PC-3 (cell line): ENCODE measurements at regions of chr1 and their contacts with region 1.

Region 1: GRCh38 chr1:150696590-150697524 is at the start of gene GOLPH3L:
- DNase-seq: peak; percentile 99
- ATAC-seq: peak; percentile 96
- H3K4me3 ChIP-seq: peak within 1 kb of the TSS; percentile 78
- H3K27ac ChIP-seq: 0 out of 2 replicates have a peak within 1 kb of the TSS, but pooled peaks have one; percentile 19
- H3K4me1 ChIP-seq: peaks cover 28% of the 10 kb centered on the region
- H3K27me3 ChIP-seq: no peaks in the 10 kb centered on the region
- CTCF ChIP-seq: no peak
- total RNA-seq, gene GOLPH3L: 9.6 and 15.6 TPM in 2 replicates

Region 2: GRCh38 chr1:150464422-150464826 is 232.4 kb before region 1 on chr1:
- CTCF ChIA-PET with region 1: no interaction called
- POLR2A ChIA-PET with region 1: no interaction called
- intact Hi-C with region 1: no loop called
- DNase-seq: peak; percentile 79
- ATAC-seq: peak; percentile 66
- H3K4me3 ChIP-seq: no peak overlapping the region
- H3K27ac ChIP-seq: no peak overlapping the region
- H3K4me1 ChIP-seq: no peaks in the 10 kb centered on the region
- H3K27me3 ChIP-seq: no peaks in the 10 kb centered on the region
- CTCF ChIP-seq: peak; percentile 83

Region 3: GRCh38 chr1:150561974-150562445 is 134.8 kb before region 1 on chr1:
- CTCF ChIA-PET with region 1: no interaction called
- POLR2A ChIA-PET with region 1: no interaction called
- intact Hi-C with region 1: loop called (anchors 5 kb)
- DNase-seq: peak; percentile 91
- ATAC-seq: peak; percentile 68
- H3K4me3 ChIP-seq: peak overlapping the region; percentile 69
- H3K27ac ChIP-seq: peak overlapping the region; percentile 96
- H3K4me1 ChIP-seq: peaks cover 37% of the 10 kb centered on the region
- H3K27me3 ChIP-seq: no peaks in the 10 kb centered on the region
- CTCF ChIP-seq: no peak

Region 4: DNA sequence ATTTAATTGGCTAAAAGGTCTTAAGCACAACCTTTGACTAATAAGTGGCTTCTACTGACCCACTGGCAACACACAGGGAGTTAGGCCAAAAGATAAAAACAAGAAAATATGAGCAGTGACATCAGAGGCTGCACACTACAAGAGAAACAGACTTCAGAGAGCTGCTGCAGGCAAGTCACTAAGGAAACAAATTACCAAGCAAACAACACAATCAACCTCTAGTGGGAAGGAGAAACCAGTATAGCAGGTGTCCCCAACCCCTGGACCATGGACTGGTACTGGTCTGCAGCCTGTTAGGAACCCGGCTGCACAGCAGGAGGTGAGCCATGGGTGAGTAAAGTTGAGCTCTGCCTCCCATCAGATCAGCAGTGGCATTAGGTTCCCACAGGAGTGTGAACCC is 46.7 kb before region 1 on chr1:
- CTCF ChIA-PET with region 1: no interaction called
- POLR2A ChIA-PET with region 1: no interaction called
- intact Hi-C with region 1: loop called (anchors 5 kb)
- DNase-seq: peak; percentile 66
- ATAC-seq: peak; percentile 71
- H3K4me3 ChIP-seq: no peak overlapping the region
- H3K27ac ChIP-seq: peak overlapping the region; percentile 68
- H3K4me1 ChIP-seq: peaks cover 7% of the 10 kb centered on the region; the same call in 1 of the 2 replicates
- H3K27me3 ChIP-seq: no peaks in the 10 kb centered on the region
- CTCF ChIP-seq: no peak

Region 5: DNA sequence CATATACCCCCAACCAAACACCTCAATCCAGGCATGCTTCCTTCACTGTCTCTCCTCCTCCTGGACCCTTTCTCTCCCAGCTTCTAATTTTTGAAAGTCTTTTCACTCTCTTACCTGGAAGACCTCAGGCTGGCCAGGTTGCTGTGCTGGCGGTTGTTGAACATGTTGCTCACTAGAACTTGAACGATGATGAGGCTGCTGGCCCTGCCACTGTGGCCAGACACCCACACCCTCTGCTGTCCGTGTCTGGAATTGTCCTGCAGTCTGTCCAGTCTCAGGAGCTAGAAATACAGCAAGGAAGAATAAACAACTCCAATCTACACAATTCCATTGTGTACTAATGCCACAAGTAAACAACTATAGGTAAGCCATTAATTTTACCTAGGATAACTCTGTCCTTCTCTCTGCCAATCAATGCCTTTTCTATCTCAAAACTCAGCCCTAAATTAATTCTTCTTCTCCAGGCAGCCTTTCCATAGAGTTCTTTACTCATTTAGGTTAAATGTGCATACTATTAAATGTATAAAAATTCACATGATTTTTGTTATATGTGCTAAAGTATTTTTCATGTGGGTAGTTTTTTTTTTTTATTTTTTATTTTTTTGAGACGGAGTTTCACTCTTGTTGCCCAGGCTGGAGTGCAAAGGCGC is 116.3 kb after region 1 on chr1:
- CTCF ChIA-PET with region 1: interaction called, 9 read pairs
- POLR2A ChIA-PET with region 1: interaction called, 4 read pairs
- intact Hi-C with region 1: loop called (anchors 1 kb)
- DNase-seq: peak; percentile 79
- ATAC-seq: peak; percentile 98
- H3K4me3 ChIP-seq: no peak overlapping the region
- H3K27ac ChIP-seq: no peak overlapping the region
- H3K4me1 ChIP-seq: no peaks in the 10 kb centered on the region
- H3K27me3 ChIP-seq: no peaks in the 10 kb centered on the region
- CTCF ChIP-seq: peak; percentile 96

Region 6: DNA sequence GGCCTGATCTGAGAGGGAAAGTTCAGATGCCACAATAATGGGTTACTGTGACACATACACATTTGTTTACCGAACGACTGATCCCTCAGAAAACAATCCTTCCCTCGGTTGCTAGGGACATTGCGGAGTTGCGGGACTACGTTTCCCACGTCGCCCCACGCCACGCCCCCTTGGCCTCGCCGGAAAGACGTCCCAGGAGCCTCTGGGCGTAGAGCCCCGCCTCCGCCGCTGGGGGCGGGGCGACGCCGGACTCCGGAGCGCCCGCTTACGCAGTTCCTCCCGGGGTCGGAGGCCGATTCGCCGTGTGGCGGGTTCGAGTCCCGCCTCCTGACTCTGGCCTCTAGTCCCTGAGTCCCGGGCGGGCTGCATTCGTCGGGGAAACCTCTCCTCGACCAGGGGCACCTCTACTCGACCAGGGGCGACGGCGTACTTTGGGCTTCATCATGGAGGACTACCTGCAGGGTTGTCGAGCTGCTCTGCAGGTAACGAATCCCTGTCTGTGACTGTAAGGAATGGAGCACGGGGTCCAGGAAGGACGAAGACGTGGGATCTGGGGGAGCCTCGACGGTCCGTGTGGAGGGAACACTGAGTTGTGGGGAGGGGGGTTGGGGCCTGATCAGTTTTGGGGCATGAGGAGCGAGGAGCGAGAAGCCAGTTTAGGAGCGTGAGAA is 311.5 kb after region 1 on chr1 and contains the start of gene PRUNE1:
- CTCF ChIA-PET with region 1: no interaction called
- POLR2A ChIA-PET with region 1: interaction called, 4 read pairs
- intact Hi-C with region 1: loop called (anchors 5 kb)
- DNase-seq: peak; percentile 100
- ATAC-seq: peak; percentile 83
- H3K4me3 ChIP-seq: peak within 1 kb of the TSS; percentile 86
- H3K27ac ChIP-seq: peak within 1 kb of the TSS; percentile 82
- H3K4me1 ChIP-seq: peaks cover 37% of the 10 kb centered on the region
- H3K27me3 ChIP-seq: no peaks in the 10 kb centered on the region
- CTCF ChIP-seq: no peak
- total RNA-seq, gene PRUNE1: 19.4 and 20.3 TPM in 2 replicates